ENCODE measurements at regions of chr4 and their contacts with region 1.

Region 1: GRCh38 chr4:73729534-73730165 is 10.7 kb upstream of the CXCL8 start:
- DNase-seq: peak; percentile 70 to 79 (median 76)
- ATAC-seq: peak; percentile 87
- H3K4me3 ChIP-seq: no peak overlapping the region
- H3K27ac ChIP-seq: no peak overlapping the region
- H3K4me1 ChIP-seq: peaks cover 21% of the 10 kb centered on the region
- H3K27me3 ChIP-seq: no peaks in the 10 kb centered on the region
- CTCF ChIP-seq: peak; percentile 61 to 87 (median 83)
- POLR2A ChIP-seq: no peak

Region 2: GRCh38 chr4:73446336-73446938 is 283.2 kb before region 1 on chr4:
- intact Hi-C with region 1: no loop called
- DNase-seq: peak in 3 of 4 donors; percentile 13 to 60 (median 35)
- ATAC-seq: peak; percentile 92
- H3K4me3 ChIP-seq: no peak overlapping the region
- H3K27ac ChIP-seq: no peak overlapping the region
- H3K4me1 ChIP-seq: peaks cover 18% of the 10 kb centered on the region
- H3K27me3 ChIP-seq: no peaks in the 10 kb centered on the region
- CTCF ChIP-seq: peak; percentile 59 to 97 (median 95)
- POLR2A ChIP-seq: no peak

Region 3: DNA sequence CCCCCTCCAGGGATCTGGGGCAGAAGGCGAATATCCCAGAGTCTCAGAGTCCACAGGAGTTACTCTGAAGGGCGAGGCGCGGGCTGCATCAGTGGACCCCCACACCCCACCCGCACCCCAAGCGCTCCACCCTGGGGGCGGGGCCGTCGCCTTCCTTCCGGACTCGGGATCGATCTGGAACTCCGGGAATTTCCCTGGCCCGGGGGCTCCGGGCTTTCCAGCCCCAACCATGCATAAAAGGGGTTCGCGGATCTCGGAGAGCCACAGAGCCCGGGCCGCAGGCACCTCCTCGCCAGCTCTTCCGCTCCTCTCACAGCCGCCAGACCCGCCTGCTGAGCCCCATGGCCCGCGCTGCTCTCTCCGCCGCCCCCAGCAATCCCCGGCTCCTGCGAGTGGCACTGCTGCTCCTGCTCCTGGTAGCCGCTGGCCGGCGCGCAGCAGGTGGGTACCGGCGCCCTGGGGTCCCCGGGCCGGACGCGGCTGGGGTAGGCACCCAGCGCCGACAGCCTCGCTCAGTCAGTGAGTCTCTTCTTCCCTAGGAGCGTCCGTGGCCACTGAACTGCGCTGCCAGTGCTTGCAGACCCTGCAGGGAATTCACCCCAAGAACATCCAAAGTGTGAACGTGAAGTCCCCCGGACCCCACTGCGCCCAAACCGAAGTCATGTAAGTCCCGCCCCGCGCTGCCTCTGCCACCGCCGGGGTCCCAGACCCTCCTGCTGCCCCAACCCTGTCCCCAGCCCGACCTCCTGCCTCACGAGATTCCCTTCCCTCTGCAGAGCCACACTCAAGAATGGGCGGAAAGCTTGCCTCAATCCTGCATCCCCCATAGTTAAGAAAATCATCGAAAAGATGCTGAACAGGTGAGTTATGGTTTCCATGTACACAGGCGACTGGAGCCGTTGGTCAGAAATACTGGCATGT is 139.7 kb after region 1 on chr4 and contains the start of gene CXCL1:
- intact Hi-C with region 1: loop called (anchors 10 kb)
- DNase-seq: peak; percentile 46 to 61 (median 48)
- ATAC-seq: peak; percentile 69
- H3K4me3 ChIP-seq: peak within 1 kb of the TSS; percentile 6 to 55
- H3K27ac ChIP-seq: peak within 1 kb of the TSS in 3 of 4 donors; percentile 25 to 85 (median 59)
- H3K4me1 ChIP-seq: peaks cover 5% of the 10 kb centered on the region
- H3K27me3 ChIP-seq: no peaks in the 10 kb centered on the region
- CTCF ChIP-seq: no peak
- POLR2A ChIP-seq: peak; percentile 25 to 83 (median 83)
- total RNA-seq, gene CXCL1: 17.1 to 52.7 TPM

Region 4: GRCh38 chr4:74133786-74134499 is 404.3 kb after region 1 on chr4:
- intact Hi-C with region 1: loop called (anchors 10 kb)
- DNase-seq: peak; percentile 82 to 88 (median 86)
- ATAC-seq: peak; percentile 99
- H3K4me3 ChIP-seq: no peak overlapping the region
- H3K27ac ChIP-seq: no peak overlapping the region
- H3K4me1 ChIP-seq: peaks cover 10% of the 10 kb centered on the region
- H3K27me3 ChIP-seq: no peaks in the 10 kb centered on the region
- CTCF ChIP-seq: peak in 6 of 7 experiments; percentile 72 to 95 (median 90)
- POLR2A ChIP-seq: no peak

Region 5: GRCh38 chr4:74353858-74354257 is 624.2 kb after region 1 on chr4:
- intact Hi-C with region 1: no loop called
- DNase-seq: no peak
- ATAC-seq: no peak
- H3K4me3 ChIP-seq: no peak overlapping the region
- H3K27ac ChIP-seq: no peak overlapping the region
- H3K4me1 ChIP-seq: no peaks in the 10 kb centered on the region
- H3K27me3 ChIP-seq: no peaks in the 10 kb centered on the region
- CTCF ChIP-seq: no peak
- POLR2A ChIP-seq: no peak

Measured in body of pancreas (tissue), 4 donors.